ENCODE measurements at regions of chr19 and their contacts with region 1.

Region 1: GRCh38 chr19:44002566-44003460 is at the start of gene ZNF230:
- DNase-seq: peak; percentile 56 to 96 (median 75)
- ATAC-seq: peak; percentile 97
- H3K4me3 ChIP-seq: peak within 1 kb of the TSS; percentile 84
- H3K4me3 Mint-ChIP-seq: peak within 1 kb of the TSS; percentile 100
- H3K27ac ChIP-seq: peak within 1 kb of the TSS; percentile 39 to 53
- H3K27ac Mint-ChIP-seq: peak within 1 kb of the TSS; percentile 90
- H3K4me1 ChIP-seq: peaks cover 18% of the 10 kb centered on the region
- H3K4me1 Mint-ChIP-seq: peaks cover 29% of the 10 kb centered on the region
- H3K27me3 ChIP-seq: no peaks in the 10 kb centered on the region
- H3K27me3 Mint-ChIP-seq: no peaks in the 10 kb centered on the region
- CTCF ChIP-seq: no peak
- total RNA-seq, gene ZNF230: 2.2 to 2.8 TPM

Region 2: DNA sequence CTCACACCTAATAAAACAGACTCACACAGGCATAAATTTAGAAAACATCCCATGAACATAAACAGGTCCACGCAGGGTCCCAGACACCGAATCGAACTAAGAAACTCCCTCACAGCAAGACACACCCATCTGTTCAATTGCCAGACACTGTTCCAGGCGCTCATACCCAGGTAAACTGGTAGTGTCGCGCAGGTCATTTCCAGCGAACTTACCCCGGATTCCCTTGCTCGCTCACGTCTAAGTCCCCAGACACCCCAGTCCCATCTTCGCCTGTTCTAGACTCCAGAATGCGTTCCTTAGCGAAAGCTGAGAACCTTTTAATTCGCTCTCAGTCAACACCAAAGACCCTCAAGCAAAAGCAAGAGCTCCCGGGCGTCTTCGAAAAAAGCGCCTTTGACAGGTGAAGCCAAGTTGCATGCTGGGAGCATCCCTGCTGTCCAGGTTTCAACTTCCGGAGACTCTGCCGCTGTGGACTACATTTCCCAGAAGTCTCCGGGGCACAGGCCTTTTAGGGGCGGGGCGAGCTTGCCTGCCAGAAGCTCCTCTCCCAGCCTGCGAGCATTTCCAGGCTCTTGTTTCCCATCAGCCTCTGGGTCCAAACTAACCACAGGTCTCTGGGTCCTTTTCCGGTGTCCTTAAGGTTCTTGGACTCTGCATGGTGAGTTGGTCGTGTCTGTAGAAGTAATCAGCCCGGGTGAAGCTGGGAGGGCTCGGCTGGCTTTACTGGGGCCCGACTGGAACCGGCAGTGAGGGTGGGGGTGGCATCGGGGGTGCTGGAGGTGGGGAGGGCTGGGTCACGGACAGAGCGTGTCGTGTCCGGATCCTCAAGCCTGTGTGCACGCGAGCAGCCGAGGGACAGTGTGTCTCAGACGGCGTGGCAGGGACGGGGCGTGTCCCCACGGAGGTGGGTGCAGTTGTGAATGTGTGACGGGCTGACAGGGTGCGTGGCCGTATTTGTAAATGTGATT is 175.7 kb before region 1 on chr19 and contains the start of gene ZNF283:
- CTCF ChIA-PET with region 1: no interaction called
- POLR2A ChIA-PET with region 1: no interaction called
- intact Hi-C with region 1: loop called in 1 of 2 experiments (anchors 5 kb)
- DNase-seq: peak; percentile 63 to 89 (median 79)
- ATAC-seq: peak; percentile 95
- H3K4me3 ChIP-seq: peak within 1 kb of the TSS; percentile 77
- H3K4me3 Mint-ChIP-seq: peak within 1 kb of the TSS; percentile 84
- H3K27ac ChIP-seq: no peak within 1 kb of the TSS
- H3K27ac Mint-ChIP-seq: peak within 1 kb of the TSS; percentile 12
- H3K4me1 ChIP-seq: peaks cover 16% of the 10 kb centered on the region
- H3K4me1 Mint-ChIP-seq: peaks cover 18% of the 10 kb centered on the region
- H3K27me3 ChIP-seq: no peaks in the 10 kb centered on the region
- H3K27me3 Mint-ChIP-seq: peaks cover 14% of the 10 kb centered on the region
- CTCF ChIP-seq: no peak
- total RNA-seq, gene ZNF283: 2.3 to 3.7 TPM

Region 3: DNA sequence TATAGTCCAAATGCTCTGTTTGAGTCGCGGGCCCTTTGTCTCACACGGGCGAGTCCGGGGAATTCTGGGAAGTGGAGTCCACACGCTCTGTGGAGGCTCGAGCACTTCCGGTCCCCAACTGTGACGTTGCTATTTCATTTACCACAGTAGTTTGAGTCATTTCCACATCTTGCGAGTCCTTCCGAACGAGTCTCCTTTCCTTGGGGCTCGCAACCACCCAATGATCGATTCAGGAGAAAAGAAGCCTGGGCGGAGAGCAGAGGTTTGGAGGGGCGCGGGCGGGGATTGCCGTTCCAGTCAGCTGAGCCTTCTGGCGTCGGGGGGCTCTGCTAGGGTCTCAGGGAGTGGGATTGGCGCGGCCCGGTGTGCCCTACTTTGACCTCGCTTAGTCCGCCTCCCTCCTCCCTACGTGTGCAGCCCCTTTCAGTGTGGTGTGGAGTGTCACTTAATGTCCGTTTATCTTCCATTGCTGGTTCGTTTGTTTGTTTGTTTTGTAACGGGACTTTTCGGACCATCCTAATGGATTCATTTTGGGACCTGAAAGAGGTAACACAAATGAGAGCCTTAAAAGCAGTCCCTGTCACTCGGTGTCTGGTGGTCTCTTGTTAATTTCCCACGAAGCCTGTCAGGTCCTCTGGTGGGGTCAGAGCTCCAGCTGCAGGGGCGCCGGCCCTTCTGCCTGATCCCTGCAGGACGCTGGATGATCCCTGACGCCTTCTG is 22.6 kb after region 1 on chr19 and contains the start of gene ZNF222:
- CTCF ChIA-PET with region 1: no interaction called
- POLR2A ChIA-PET with region 1: interaction called, 3 read pairs
- intact Hi-C with region 1: loop called in 1 of 2 experiments (anchors 1 kb)
- DNase-seq: peak; percentile 53 to 90 (median 70)
- ATAC-seq: peak; percentile 97
- H3K4me3 ChIP-seq: peak within 1 kb of the TSS; percentile 79
- H3K4me3 Mint-ChIP-seq: peak within 1 kb of the TSS; percentile 98
- H3K27ac ChIP-seq: no peak within 1 kb of the TSS
- H3K27ac Mint-ChIP-seq: peak within 1 kb of the TSS; percentile 88
- H3K4me1 ChIP-seq: peaks cover 14% of the 10 kb centered on the region
- H3K4me1 Mint-ChIP-seq: peaks cover 30% of the 10 kb centered on the region
- H3K27me3 ChIP-seq: no peaks in the 10 kb centered on the region
- H3K27me3 Mint-ChIP-seq: peaks cover 9% of the 10 kb centered on the region
- CTCF ChIP-seq: no peak
- total RNA-seq, gene ZNF222: 4.5 to 5.8 TPM

Region 4: DNA sequence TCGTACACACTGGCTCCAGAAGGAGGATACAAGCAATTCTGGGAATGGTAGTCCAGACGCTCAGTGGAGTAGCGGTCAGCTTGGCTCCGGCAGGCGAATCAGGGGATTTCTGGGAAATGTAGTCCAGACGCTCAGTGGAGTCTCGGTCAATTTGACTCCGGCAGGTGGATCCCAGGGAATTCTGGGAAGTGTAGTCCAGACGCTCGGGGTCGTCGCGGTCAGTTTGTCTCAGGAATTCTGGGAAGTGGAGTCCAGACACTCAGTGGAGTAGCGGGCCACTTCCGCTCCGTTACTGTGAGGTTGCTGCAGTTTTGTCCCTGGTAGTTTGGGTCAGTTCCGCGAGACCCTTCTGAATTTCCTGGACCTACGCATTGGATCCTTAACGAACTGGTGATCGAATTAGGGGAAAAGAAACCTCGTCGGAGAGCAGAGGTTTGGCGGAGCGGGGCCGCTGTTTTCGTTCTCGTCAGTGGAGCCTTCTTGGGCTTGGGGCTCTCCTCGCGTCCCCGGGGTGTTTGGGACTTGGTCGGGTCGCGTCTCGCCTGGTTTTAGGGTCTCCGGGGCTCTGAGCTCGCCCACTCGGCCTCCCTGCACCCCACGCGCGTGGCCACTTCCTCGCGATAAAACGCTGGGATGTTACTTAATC is 110.4 kb after region 1 on chr19 and contains the start of gene ZNF225:
- CTCF ChIA-PET with region 1: no interaction called
- POLR2A ChIA-PET with region 1: no interaction called
- intact Hi-C with region 1: loop called in 1 of 2 experiments (anchors 2 kb)
- DNase-seq: peak; percentile 55 to 94 (median 72)
- ATAC-seq: peak; percentile 89
- H3K4me3 ChIP-seq: peak within 1 kb of the TSS; percentile 75
- H3K4me3 Mint-ChIP-seq: peak within 1 kb of the TSS; percentile 95
- H3K27ac ChIP-seq: peak within 1 kb of the TSS in 1 of 2 donors; percentile 29
- H3K27ac Mint-ChIP-seq: peak within 1 kb of the TSS; percentile 57
- H3K4me1 ChIP-seq: peaks cover 17% of the 10 kb centered on the region
- H3K4me1 Mint-ChIP-seq: peaks cover 37% of the 10 kb centered on the region
- H3K27me3 ChIP-seq: no peaks in the 10 kb centered on the region
- H3K27me3 Mint-ChIP-seq: no peaks in the 10 kb centered on the region
- CTCF ChIP-seq: no peak
- total RNA-seq, gene ZNF225: 0.71 to 0.73 TPM

Region 5: DNA sequence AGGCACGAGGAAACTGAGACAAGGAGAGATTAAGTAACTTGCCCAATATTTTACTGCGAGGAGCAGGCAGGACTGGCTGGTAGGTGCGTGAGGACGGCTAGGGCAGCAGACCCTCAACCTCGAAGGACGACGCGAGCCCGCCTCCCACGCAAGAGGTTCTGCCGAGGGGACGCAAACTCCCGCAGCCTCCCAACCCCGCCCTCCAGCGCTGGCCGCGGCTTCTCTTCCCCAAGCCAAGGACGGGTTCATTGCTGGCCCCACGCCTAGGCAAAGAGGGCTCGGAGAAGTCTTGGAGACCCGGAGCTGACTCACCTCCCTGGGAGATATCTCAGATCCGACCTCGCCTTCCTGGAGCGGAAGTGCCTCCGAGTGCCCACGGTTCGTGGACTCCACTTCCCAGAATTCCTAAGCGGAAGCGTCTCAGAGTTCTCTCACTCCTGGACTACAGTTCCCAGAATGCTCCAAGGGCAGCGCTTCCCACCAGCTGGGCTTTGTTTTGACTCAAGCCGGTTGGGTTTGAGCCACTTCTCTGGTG is 301.9 kb after region 1 on chr19 and contains the start of gene ZNF235:
- CTCF ChIA-PET with region 1: no interaction called
- POLR2A ChIA-PET with region 1: no interaction called
- intact Hi-C with region 1: loop called in 1 of 2 experiments (anchors 5 kb)
- DNase-seq: peak; percentile 24 to 88 (median 60)
- ATAC-seq: peak; percentile 97
- H3K4me3 ChIP-seq: peak within 1 kb of the TSS; percentile 96
- H3K4me3 Mint-ChIP-seq: peak within 1 kb of the TSS; percentile 92
- H3K27ac ChIP-seq: peak within 1 kb of the TSS in 1 of 2 donors; percentile 58
- H3K27ac Mint-ChIP-seq: peak within 1 kb of the TSS; percentile 11
- H3K4me1 ChIP-seq: peaks cover 19% of the 10 kb centered on the region
- H3K4me1 Mint-ChIP-seq: peaks cover 18% of the 10 kb centered on the region
- H3K27me3 ChIP-seq: no peaks in the 10 kb centered on the region
- H3K27me3 Mint-ChIP-seq: peaks cover 5% of the 10 kb centered on the region
- CTCF ChIP-seq: no peak
- total RNA-seq, gene ZNF235: 2.4 TPM

Measured in CD4-positive, alpha-beta T cell (primary cell).